Adrenal gland (tissue), 19 donors: ENCODE measurements at regions of chr19 and their contacts with region 1.

Region 1: GRCh38 chr19:7799640-7800355 is 30.2 kb upstream of the EVI5L start:
- DNase-seq: peak; percentile 72 to 85 (median 80)
- H3K4me3 ChIP-seq: peak overlapping the region in 1 of 4 donors; percentile 42
- H3K27ac ChIP-seq: no peak overlapping the region
- H3K4me1 ChIP-seq: peaks cover 0 to 7% of the 10 kb centered on the region in 2 donors
- H3K27me3 ChIP-seq: no peaks in the 10 kb centered on the region
- CTCF ChIP-seq: peak; percentile 53 to 78 (median 72)
- POLR2A ChIP-seq: no peak

Region 2: GRCh38 chr19:7366701-7367420 is 432.9 kb before region 1 on chr19:
- intact Hi-C with region 1: loop called in 1 of 2 experiments (anchors 10 kb)
- DNase-seq: no peak
- H3K4me3 ChIP-seq: no peak overlapping the region
- H3K27ac ChIP-seq: no peak overlapping the region
- H3K4me1 ChIP-seq: peaks cover 0 to 9% of the 10 kb centered on the region in 2 donors
- H3K27me3 ChIP-seq: no peaks in the 10 kb centered on the region
- CTCF ChIP-seq: peak in 4 of 6 experiments; percentile 13 to 32 (median 24)
- POLR2A ChIP-seq: no peak

Region 3: GRCh38 chr19:7565332-7565731 is 234.5 kb before region 1 on chr19:
- intact Hi-C with region 1: loop called in 1 of 2 experiments (anchors 5 kb)
- DNase-seq: no peak
- H3K4me3 ChIP-seq: no peak overlapping the region
- H3K27ac ChIP-seq: no peak overlapping the region
- H3K4me1 ChIP-seq: no peaks in the 10 kb centered on the region
- H3K27me3 ChIP-seq: no peaks in the 10 kb centered on the region
- CTCF ChIP-seq: no peak
- POLR2A ChIP-seq: no peak

Region 4: GRCh38 chr19:7680606-7681339 is 119.0 kb before region 1 on chr19 and contains the start of gene TRAPPC5:
- intact Hi-C with region 1: loop called in 1 of 2 experiments (anchors 10 kb)
- DNase-seq: peak; percentile 79 to 90 (median 82)
- H3K4me3 ChIP-seq: peak within 1 kb of the TSS; percentile 85 to 98 (median 90)
- H3K27ac ChIP-seq: peak within 1 kb of the TSS in 4 of 5 donors; percentile 59 to 90 (median 78)
- H3K4me1 ChIP-seq: peaks cover 3 to 13% of the 10 kb centered on the region in 2 donors
- H3K27me3 ChIP-seq: no peaks in the 10 kb centered on the region
- CTCF ChIP-seq: peak; percentile 8 to 99 (median 73)
- POLR2A ChIP-seq: peak; percentile 13 to 27
- total RNA-seq, gene TRAPPC5: 85.3 to 227 (median 145) TPM

Region 5: DNA sequence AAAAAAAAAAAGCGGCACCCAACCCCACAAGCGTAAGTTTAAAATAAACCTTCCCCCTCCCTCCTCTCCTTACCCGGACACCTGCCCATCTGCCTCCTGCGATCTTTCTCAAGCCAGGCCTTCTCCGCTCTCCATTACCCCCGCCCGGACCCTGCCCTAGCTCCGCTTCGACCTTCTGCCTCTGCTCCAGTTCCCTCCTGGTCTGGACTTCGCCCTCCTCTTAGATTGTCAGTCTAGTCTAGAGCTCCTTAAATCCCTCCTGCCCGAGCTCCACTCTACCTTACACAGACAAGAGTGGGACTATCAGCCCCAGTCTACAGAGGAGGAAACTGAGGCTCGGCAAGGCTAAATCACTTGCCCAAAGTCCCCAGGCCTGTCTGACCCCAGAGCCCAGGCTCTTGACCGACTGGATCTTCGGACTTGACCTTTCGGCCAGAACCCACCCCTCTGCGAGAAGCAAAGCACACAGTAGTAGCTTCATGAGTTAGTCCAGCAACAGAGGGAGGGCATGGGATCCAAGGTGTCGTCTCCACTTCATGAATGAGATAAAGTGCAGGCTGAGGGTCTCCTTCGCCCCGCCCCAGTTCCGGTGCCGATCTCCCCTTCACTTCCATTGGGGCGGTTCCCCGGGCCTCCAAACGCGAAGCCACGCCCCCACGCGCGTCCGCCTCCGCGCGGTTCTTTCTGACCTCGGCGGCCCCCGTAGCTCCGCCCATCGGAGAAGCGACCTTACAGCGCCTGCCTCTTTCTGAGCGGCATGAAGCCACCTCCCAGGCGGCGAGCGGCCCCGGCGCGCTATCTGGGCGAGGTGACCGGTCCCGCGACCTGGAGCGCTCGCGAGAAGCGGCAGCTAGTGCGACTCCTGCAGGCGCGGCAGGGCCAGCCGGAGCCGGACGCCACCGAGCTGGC is 120.1 kb after region 1 on chr19 and contains the start of gene SNAPC2:
- intact Hi-C with region 1: no loop called
- DNase-seq: peak; percentile 95 to 98 (median 97)
- H3K4me3 ChIP-seq: peak within 1 kb of the TSS in 3 of 4 donors; percentile 22 to 96 (median 56)
- H3K27ac ChIP-seq: peak within 1 kb of the TSS; percentile 85 to 97 (median 88)
- H3K4me1 ChIP-seq: peaks cover 26 to 35% of the 10 kb centered on the region in 2 donors
- H3K27me3 ChIP-seq: peaks cover 25% of the 10 kb centered on the region
- CTCF ChIP-seq: peak in 1 of 6 experiments; percentile 30
- POLR2A ChIP-seq: peak in 1 of 2 donors; percentile 72
- total RNA-seq, gene SNAPC2: 12.7 to 38.2 (median 22.1) TPM